ENCODE measurements at regions of chrX and their contacts with region 1.

Region 1: DNA sequence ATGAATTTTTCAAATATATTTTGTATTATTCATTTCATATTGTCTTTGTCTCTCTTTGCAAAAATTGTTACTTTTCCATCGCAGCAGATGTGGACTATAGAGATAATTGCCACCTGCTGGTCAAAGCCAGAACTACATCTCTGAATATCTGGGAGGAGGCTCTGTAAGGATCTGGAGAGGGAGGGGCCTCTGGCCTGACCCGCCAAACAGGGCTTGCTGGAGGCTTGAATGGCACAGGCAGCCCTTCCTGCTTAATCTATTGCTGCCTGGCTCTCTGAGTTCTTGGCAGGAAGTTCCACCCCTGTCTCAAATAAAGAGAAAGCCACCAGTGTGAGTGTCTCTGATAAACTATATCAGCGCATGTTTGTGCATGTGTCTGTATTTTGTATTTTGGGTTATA is 132.4 kb downstream of the ZMAT1 start:
- DNase-seq: peak; percentile 60 to 84 (median 73)
- H3K4me3 ChIP-seq: no peak overlapping the region
- H3K27ac ChIP-seq: no peak overlapping the region
- H3K4me1 ChIP-seq: peaks cover 2% of the 10 kb centered on the region
- H3K27me3 ChIP-seq: no peaks in the 10 kb centered on the region
- CTCF ChIP-seq: peak; percentile 54 to 64 (median 63)
- EP300 ChIP-seq: no peak
- POLR2A ChIP-seq: no peak

Region 2: DNA sequence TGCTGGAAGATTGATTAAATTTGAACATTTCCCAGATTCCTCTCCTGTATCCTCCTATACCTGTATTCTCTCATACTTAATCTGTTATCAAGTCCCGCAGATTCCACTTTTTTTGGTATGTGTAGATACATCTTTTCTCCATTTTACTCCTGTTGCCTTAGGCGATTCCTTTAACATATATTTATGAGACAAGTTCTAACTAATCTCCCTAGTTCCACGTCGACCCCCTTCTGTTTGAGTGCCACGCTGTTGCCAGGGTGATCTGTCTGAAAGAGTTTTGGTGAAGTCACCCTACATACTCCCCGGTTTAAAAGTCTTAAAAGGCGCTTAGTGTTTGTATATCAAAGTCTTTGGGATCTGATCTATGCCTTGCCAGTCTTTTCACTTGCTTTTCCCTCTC is 388.9 kb before region 1 on chrX:
- intact Hi-C with region 1: loop called in 2 of 4 experiments (anchors 5 kb)
- DNase-seq: no peak
- H3K4me3 ChIP-seq: no peak overlapping the region
- H3K27ac ChIP-seq: no peak overlapping the region
- H3K4me1 ChIP-seq: peaks cover 1% of the 10 kb centered on the region
- H3K27me3 ChIP-seq: no peaks in the 10 kb centered on the region
- CTCF ChIP-seq: no peak
- EP300 ChIP-seq: no peak
- POLR2A ChIP-seq: no peak

Region 3: GRCh38 chrX:101415180-101416145 is 383.9 kb before region 1 on chrX:
- intact Hi-C with region 1: loop called in 2 of 4 experiments (anchors 5 kb)
- DNase-seq: peak in 3 of 5 donors; percentile 27 to 42 (median 40)
- H3K4me3 ChIP-seq: no peak overlapping the region
- H3K27ac ChIP-seq: peak overlapping the region; percentile 4 to 70
- H3K4me1 ChIP-seq: peaks cover 6% of the 10 kb centered on the region
- H3K27me3 ChIP-seq: no peaks in the 10 kb centered on the region
- CTCF ChIP-seq: peak; percentile 56 to 74 (median 59)
- EP300 ChIP-seq: no peak
- POLR2A ChIP-seq: no peak

Region 4: GRCh38 chrX:101595739-101596419 is 203.5 kb before region 1 on chrX:
- intact Hi-C with region 1: loop called in 3 of 4 experiments (anchors 10 kb)
- DNase-seq: peak in 1 of 5 donors; percentile 30
- H3K4me3 ChIP-seq: no peak overlapping the region
- H3K27ac ChIP-seq: no peak overlapping the region
- H3K4me1 ChIP-seq: no peaks in the 10 kb centered on the region
- H3K27me3 ChIP-seq: no peaks in the 10 kb centered on the region
- CTCF ChIP-seq: peak in 2 of 3 donors; percentile 41 to 45
- EP300 ChIP-seq: no peak
- POLR2A ChIP-seq: no peak

Measured in ovary (tissue), 10 donors.